Activated CD4-positive, alpha-beta memory T cell treated with anti-CD3 and anti-CD28 coated beads for 36 hours (primary cell): ENCODE measurements at regions of chr1 and their contacts with region 1.

Region 1: GRCh38 chr1:2412519-2413233 is at the start of gene PEX10:
- DNase-seq: peak; percentile 99
- H3K4me3 Mint-ChIP-seq: peak within 1 kb of the TSS; percentile 88
- H3K27ac Mint-ChIP-seq: peak within 1 kb of the TSS; percentile 82
- H3K4me1 Mint-ChIP-seq: peaks cover 34% of the 10 kb centered on the region
- H3K27me3 Mint-ChIP-seq: no peaks in the 10 kb centered on the region
- total RNA-seq, gene PEX10: 14.8 to 15.4 TPM

Region 2: DNA sequence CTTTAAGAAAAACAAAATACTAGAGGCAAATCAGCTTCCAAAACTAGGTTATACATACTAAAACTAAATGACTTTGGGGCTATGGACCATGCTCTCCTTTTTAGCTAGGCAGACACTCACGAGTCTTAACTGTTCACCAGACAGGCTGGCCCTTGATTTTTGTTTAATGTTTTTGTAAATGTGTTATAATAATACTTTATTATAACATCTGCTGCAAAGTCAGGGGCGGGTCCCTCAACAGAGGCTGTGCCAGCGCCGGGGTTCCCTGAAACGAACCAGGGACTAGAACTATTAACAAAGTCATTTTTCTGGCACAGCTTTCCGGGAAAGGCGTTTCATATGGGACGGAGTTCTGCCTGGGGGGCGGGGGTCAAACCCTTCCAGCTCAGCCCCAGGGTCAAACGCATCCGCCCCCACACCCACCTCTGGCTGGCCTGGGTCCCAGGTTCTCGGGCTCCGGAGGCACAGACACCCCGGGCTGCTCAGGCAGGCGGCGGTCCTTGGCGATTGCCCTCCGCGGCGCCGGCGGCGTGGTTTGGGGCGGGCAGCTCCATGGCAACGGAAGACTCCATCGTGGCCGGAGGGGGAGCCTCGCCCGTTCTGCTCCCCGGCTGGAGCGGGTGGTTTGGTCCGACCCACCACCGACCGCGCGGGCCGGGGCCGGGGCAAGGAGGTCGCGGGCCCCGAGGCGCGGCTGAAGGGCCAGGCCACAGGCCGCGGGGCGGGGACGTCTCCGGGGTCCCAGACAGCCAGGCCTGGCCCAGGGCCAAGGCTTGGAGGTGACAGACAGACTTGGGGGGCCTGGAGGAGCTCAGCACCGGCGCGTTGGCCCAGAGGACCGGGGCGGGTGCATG is 409.2 kb before region 1 on chr1 and contains the start of gene CFAP74:
- CTCF ChIA-PET with region 1: no interaction called
- POLR2A ChIA-PET with region 1: no interaction called
- intact Hi-C with region 1: no loop called
- DNase-seq: peak; percentile 22
- H3K4me3 Mint-ChIP-seq: no peak within 1 kb of the TSS
- H3K27ac Mint-ChIP-seq: no peak within 1 kb of the TSS
- H3K4me1 Mint-ChIP-seq: no peaks in the 10 kb centered on the region
- H3K27me3 Mint-ChIP-seq: peaks cover 36% of the 10 kb centered on the region
- total RNA-seq, gene CFAP74: not detected

Region 3: GRCh38 chr1:2391041-2391930 is 21.4 kb before region 1 on chr1 and contains the starts of genes MORN1 and RER1:
- CTCF ChIA-PET with region 1: interaction called, 10 read pairs
- POLR2A ChIA-PET with region 1: interaction called, 7 read pairs
- intact Hi-C with region 1: loop called (anchors 1 kb)
- DNase-seq: peak; percentile 99
- H3K4me3 Mint-ChIP-seq: peak within 1 kb of the TSS; percentile 93
- H3K27ac Mint-ChIP-seq: peak within 1 kb of the TSS; percentile 84
- H3K4me1 Mint-ChIP-seq: peaks cover 39% of the 10 kb centered on the region
- H3K27me3 Mint-ChIP-seq: no peaks in the 10 kb centered on the region
- total RNA-seq, gene MORN1: 5.4 to 6.3 TPM
- total RNA-seq, gene RER1: 148 to 154 TPM

Region 4: GRCh38 chr1:2525920-2526823 is 113.5 kb after region 1 on chr1 and contains the start of gene PANK4:
- CTCF ChIA-PET with region 1: interaction called, 20 read pairs
- POLR2A ChIA-PET with region 1: interaction called, 15 read pairs
- intact Hi-C with region 1: loop called (anchors 1 kb)
- DNase-seq: peak; percentile 92
- H3K4me3 Mint-ChIP-seq: peak within 1 kb of the TSS; percentile 85
- H3K27ac Mint-ChIP-seq: peak within 1 kb of the TSS; percentile 92
- H3K4me1 Mint-ChIP-seq: peaks cover 45% of the 10 kb centered on the region
- H3K27me3 Mint-ChIP-seq: peaks cover 5% of the 10 kb centered on the region
- total RNA-seq, gene PANK4: 42.6 to 45.1 TPM

Region 5: GRCh38 chr1:2642560-2643413 is 230.1 kb after region 1 on chr1:
- CTCF ChIA-PET with region 1: no interaction called
- POLR2A ChIA-PET with region 1: no interaction called
- intact Hi-C with region 1: loop called (anchors 5 kb)
- DNase-seq: peak; percentile 97
- H3K4me3 Mint-ChIP-seq: peak overlapping the region; percentile 85
- H3K27ac Mint-ChIP-seq: peak overlapping the region; percentile 89
- H3K4me1 Mint-ChIP-seq: peaks cover 10% of the 10 kb centered on the region
- H3K27me3 Mint-ChIP-seq: no peaks in the 10 kb centered on the region

Region 6: GRCh38 chr1:2786329-2787162 is 373.9 kb after region 1 on chr1:
- CTCF ChIA-PET with region 1: interaction called, 9 read pairs
- POLR2A ChIA-PET with region 1: no interaction called
- intact Hi-C with region 1: loop called (anchors 2 kb)
- DNase-seq: peak; percentile 74
- H3K4me3 Mint-ChIP-seq: no peak overlapping the region
- H3K27ac Mint-ChIP-seq: no peak overlapping the region
- H3K4me1 Mint-ChIP-seq: peaks cover 4% of the 10 kb centered on the region
- H3K27me3 Mint-ChIP-seq: peaks cover 23% of the 10 kb centered on the region